Activated CD8-positive, alpha-beta memory T cell treated with anti-CD3 and anti-CD28 coated beads, Interleukin-2, amount 10 ng/mL, durations not matched to agents 7 days and 5 days (primary cell): ENCODE measurements at regions of chr4 and their contacts with region 1.

Region 1: DNA sequence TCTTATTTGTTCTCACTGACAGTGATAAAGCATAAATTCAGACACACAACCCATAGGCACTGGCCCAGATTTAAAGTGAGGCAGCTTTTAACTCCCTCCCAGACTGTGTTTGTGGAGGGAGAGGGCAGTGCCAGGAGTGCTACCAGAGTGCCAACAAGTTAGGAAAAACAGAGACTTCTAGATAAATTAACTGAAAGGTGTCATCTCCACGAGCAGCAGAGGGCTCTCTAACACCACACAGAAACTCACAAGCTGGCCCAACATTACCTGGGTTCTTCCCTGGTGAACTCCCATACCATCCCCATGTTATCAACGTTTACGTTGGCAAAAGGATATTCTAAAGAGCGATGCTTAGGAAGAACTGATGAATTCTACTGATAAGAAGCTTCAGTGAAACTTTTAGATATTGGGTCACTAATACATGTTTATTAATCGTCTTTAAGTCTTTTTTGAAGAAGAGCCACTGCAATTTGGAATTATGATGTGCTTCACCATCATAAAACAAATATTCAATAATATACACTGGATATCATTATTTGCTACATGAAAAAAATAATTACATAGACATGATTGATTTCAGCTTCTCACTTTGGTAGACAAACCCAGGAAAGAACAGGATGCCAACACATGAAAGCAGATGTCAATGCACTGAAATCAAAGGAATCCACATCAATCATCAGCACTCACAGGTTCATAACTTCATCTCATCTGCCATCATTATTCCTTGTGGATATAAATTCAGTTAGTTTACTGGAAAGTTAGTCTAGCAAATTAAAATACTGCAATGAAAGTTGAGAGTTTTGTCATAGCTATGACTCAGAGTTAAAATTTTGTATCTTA is 121.2 kb upstream of the NAP1L5 start:
- DNase-seq: peak; percentile 64
- ATAC-seq: no peak
- H3K4me3 Mint-ChIP-seq: no peak overlapping the region
- H3K27ac Mint-ChIP-seq: no peak overlapping the region
- H3K4me1 Mint-ChIP-seq: peaks cover 25% of the 10 kb centered on the region
- H3K27me3 Mint-ChIP-seq: peaks cover 14% of the 10 kb centered on the region

Region 2: DNA sequence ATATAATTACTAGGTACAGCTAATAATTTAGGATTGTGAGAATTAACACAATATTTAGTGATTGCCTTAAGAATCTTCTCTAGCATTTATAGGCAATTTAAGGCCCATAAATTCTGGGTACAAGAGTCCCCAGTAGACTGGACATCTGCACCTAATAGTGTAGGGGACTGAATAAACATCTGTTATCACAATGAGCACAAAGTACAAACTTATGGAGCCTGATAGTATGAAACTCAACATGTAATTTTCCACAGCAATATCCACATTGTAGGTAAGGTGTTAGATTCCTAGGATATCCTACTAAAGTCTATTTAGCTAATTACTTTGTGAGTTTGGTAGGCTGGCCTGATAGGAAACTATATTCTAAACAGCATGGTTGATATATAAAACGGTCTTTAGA is 59.8 kb after region 1 on chr4:
- CTCF ChIA-PET with region 1: no interaction called
- DNase-seq: no peak
- ATAC-seq: no peak
- H3K4me3 Mint-ChIP-seq: no peak overlapping the region
- H3K27ac Mint-ChIP-seq: no peak overlapping the region
- H3K4me1 Mint-ChIP-seq: no peaks in the 10 kb centered on the region
- H3K27me3 Mint-ChIP-seq: peaks cover 8% of the 10 kb centered on the region

Region 3: DNA sequence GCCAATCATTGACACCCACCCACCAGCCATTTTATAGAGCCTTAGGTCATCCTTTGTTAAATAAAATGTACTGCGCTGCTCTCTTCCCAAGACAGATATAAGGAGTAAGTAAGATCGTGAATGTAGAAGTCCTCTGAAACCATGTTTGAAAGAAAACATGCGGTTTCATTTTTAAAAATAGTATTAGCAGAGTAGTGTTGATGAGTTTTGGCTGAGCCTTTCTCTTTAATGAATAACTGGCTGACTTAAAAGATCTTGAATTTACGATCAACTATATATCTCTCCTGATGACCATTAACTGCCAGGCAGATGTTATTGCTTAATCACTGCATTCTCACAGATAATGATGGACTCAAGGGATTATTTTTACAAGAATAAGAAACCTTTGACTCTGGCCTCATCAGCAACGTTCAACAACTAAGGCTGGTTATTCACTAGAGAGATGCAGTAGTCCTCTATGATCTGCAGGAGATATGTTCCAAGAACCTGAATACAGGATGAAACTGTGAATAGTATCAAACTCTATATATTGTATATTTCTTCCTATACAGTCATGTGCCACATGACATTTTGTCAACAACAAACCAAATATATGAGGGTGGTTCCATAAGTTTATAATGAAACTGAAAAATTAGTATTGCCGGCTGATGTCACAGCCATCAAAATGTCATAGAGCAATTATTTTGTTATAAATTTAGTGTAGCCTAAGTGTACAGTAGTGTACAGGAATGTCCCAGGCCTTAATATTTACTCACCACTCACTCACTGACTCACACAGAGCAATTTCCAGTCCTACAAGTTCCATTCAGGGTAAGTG is 157.3 kb after region 1 on chr4:
- CTCF ChIA-PET with region 1: no interaction called
- DNase-seq: no peak
- ATAC-seq: no peak
- H3K4me3 Mint-ChIP-seq: no peak overlapping the region
- H3K27ac Mint-ChIP-seq: no peak overlapping the region
- H3K4me1 Mint-ChIP-seq: no peaks in the 10 kb centered on the region
- H3K27me3 Mint-ChIP-seq: peaks cover 6% of the 10 kb centered on the region

Region 4: DNA sequence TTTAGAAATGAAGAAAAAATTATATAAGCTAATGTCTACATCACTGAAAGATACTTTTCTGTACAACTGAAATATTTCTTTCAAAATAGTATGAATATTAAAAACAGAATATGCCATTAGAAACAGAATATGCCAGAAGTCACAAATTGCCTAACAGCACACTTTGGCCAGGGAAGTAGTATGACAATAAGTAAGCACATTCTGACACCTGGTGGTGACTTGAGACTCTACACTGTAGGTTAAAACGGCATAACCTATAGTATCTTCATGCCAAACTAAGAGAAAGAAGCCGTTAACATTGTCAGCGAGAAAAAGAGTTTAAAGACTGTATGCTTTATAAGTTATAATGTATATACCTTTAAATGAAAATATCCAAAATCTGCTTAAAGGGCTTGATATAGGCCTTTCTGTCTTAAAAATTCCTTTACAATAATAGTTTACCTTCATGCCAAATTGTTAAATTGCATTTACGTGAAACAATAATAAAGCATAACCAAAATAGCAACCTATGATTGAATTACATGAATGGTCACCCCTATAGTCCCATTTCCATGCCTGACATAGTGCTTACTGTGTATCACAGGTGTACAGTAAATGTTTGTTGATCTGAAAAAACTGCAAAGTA is 205.3 kb after region 1 on chr4:
- CTCF ChIA-PET with region 1: interaction called, 68 read pairs
- DNase-seq: peak; percentile 62
- ATAC-seq: peak; percentile 90
- H3K4me3 Mint-ChIP-seq: no peak overlapping the region
- H3K27ac Mint-ChIP-seq: no peak overlapping the region
- H3K4me1 Mint-ChIP-seq: no peaks in the 10 kb centered on the region
- H3K27me3 Mint-ChIP-seq: no peaks in the 10 kb centered on the region